ENCODE measurements at regions of chr1 and their contacts with region 1.

Region 1: GRCh38 chr1:91537281-91537986 is 36.8 kb downstream of the CDC7 start:
- DNase-seq: no peak
- H3K4me3 ChIP-seq: no peak overlapping the region
- H3K27ac ChIP-seq: no peak overlapping the region
- H3K4me1 ChIP-seq: no peaks in the 10 kb centered on the region
- H3K27me3 ChIP-seq: no peaks in the 10 kb centered on the region
- CTCF ChIP-seq: no peak
- POLR2A ChIP-seq: no peak

Region 2: DNA sequence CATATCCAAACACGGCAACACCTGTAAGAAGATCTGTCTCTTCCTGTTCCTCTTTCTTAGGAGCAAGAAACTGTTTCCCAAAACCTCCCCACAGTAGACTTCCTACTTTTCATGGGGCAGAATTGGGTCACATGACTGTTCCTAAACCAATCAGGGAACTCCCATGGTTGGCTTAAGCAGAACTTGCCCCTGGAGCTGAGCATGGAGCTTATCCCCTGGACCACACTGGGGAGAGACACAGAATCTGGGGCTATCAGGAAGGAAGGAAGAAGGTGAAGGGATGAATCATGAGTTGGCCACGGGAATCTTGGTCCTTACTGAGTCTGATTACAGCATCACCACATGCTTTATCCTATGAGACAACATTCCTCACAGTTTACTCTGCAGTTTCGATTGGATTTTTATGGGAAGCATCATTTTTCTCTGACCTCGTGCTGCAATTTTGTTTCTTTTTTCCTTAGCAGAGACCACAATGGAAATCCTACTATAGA is 45.0 kb after region 1 on chr1:
- intact Hi-C with region 1: loop called (anchors 5 kb)
- DNase-seq: no peak
- H3K4me3 ChIP-seq: no peak overlapping the region
- H3K27ac ChIP-seq: peak overlapping the region; percentile 58 to 69
- H3K4me1 ChIP-seq: peaks cover 7% of the 10 kb centered on the region
- H3K27me3 ChIP-seq: no peaks in the 10 kb centered on the region
- CTCF ChIP-seq: no peak
- POLR2A ChIP-seq: no peak

Region 3: DNA sequence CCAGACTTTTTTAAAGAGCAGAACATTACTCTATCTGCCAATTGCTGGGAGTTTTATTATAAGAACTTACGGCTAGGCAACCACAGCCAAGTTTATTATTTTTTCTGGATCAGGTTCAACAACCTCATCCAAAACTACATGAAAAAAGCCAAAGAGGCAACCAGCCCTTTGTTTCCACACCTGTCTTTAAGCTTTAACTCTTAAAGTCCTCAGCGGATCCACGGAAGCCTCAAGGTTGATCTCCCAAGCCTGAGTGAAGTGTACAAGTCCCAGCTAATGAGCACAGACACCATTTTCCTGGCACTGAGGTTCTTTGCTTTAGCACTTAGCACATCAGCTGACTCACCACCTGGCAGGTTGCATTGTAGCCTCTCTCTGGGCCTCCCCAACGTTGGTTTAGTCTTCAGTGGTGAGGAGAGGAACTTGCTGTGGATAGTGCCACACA is 205.4 kb after region 1 on chr1:
- intact Hi-C with region 1: no loop called
- DNase-seq: peak; percentile 55
- H3K4me3 ChIP-seq: no peak overlapping the region
- H3K27ac ChIP-seq: peak overlapping the region; percentile 64 to 72
- H3K4me1 ChIP-seq: peaks cover 11% of the 10 kb centered on the region
- H3K27me3 ChIP-seq: no peaks in the 10 kb centered on the region
- CTCF ChIP-seq: peak in 1 of 4 experiments; percentile 12
- POLR2A ChIP-seq: no peak

Measured in prostate gland (tissue), 2 donors.